ENCODE measurements at regions of chr6 and their contacts with region 1.

Region 1: DNA sequence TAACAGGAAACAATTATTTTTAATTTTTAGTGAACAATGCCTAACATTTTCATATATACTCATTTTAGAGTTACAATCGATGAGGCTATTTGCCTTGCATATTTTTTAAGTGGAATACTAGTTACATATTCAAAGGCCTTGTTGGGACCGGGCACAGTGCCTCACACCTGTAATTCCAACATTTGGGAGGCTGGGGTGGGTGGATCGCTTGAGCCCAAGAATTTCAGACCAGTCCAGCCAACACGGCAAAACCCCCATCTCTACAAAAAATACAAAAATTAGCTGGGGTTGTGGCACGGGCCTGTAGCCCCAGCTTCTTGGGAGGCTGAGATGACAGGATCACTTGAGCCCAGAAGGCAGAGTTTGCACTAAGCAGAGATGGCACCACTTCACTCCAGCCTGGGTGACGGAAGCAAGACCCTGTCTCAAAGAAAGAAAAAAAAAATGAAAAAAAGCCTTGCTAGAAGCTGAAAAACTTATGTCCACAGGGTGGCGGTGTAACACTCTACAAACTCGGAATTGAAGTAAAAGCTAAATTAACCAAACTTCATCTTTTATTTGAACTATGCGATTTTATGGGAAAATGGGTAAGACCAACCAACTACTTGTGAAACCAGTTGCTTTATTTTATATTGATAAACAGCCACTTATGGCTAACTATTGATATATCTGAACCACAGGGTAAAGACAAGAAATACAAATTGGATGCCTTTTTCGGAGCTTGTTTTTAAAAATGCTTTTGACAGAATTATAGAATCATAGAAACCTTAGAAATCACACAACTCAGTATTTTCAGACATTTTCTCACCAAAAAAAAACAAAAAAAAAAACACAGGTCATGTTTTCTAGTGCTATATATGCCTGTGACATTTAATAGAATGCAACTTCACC is 24.1 kb upstream of the ROS1 start:
- DNase-seq: peak in 1 of 2 experiments; percentile 56
- H3K4me3 ChIP-seq: no peak overlapping the region
- H3K27ac ChIP-seq: no peak overlapping the region
- H3K4me1 ChIP-seq: peaks cover 0 to 7% (median 3%) of the 10 kb centered on the region in 4 experiments; a peak in 4 of 7 replicates
- H3K27me3 ChIP-seq: no peaks in the 10 kb centered on the region
- CTCF ChIP-seq: peak in 2 of 3 experiments; percentile 52 to 69; a peak in 2 of 4 replicates
- EP300 ChIP-seq: no peak
- POLR2A ChIP-seq: no peak
- RAD21 ChIP-seq: peak; percentile 78 to 81

Region 2: GRCh38 chr6:116500969-116501433 is 948.8 kb before region 1 on chr6:
- CTCF ChIA-PET with region 1: no interaction called
- POLR2A ChIA-PET with region 1: no interaction called
- DNase-seq: no peak
- H3K4me3 ChIP-seq: no peak overlapping the region
- H3K27ac ChIP-seq: no peak overlapping the region
- H3K4me1 ChIP-seq: peaks cover 0 to 4% (median 0%) of the 10 kb centered on the region in 4 experiments; a peak in 1 of 7 replicates
- H3K27me3 ChIP-seq: no peaks in the 10 kb centered on the region
- CTCF ChIP-seq: no peak
- EP300 ChIP-seq: no peak
- POLR2A ChIP-seq: no peak
- RAD21 ChIP-seq: no peak

Region 3: DNA sequence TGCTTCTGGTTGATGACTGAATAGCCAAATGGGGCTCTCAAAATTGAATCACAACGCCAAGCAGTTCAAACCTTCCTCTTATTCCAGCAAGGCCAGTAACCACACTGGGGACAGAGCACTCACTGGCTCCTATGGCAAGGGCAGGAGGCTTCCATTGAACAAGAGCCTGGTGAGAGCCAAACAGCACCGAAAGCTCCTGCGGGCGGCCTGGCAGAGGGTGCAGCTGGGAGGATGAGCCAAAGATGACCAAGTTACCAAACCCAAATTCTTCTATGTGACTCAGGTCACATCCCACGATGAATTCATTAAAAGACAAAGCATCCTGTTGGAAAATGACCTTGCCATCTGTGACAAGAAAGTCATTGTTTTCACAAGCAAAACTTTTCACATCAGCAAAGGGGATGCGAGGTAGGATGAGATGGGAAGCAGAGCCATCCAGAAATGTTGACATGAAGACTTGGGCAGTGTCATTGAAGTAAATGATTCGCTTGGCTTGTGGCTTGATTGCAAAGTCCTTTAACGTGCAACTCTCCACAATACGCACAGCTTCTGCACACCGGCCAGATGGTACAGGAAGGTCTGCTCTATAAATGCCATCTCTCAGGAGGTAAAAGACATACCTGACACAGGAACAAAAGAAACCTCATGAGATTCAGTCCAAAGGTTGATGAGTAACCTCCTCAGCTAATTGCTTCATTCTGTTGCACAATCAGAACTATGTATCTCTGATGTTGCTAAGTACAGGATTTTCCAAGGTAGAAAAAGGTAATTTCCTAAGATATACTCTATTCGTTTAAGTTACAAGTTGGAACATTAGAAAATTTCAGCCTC is 60.4 kb before region 1 on chr6:
- CTCF ChIA-PET with region 1: no interaction called
- POLR2A ChIA-PET with region 1: no interaction called
- DNase-seq: no peak
- H3K4me3 ChIP-seq: no peak overlapping the region
- H3K27ac ChIP-seq: no peak overlapping the region
- H3K4me1 ChIP-seq: no peaks in the 10 kb centered on the region
- H3K27me3 ChIP-seq: no peaks in the 10 kb centered on the region
- CTCF ChIP-seq: no peak
- EP300 ChIP-seq: no peak
- POLR2A ChIP-seq: no peak
- RAD21 ChIP-seq: no peak

Region 4: DNA sequence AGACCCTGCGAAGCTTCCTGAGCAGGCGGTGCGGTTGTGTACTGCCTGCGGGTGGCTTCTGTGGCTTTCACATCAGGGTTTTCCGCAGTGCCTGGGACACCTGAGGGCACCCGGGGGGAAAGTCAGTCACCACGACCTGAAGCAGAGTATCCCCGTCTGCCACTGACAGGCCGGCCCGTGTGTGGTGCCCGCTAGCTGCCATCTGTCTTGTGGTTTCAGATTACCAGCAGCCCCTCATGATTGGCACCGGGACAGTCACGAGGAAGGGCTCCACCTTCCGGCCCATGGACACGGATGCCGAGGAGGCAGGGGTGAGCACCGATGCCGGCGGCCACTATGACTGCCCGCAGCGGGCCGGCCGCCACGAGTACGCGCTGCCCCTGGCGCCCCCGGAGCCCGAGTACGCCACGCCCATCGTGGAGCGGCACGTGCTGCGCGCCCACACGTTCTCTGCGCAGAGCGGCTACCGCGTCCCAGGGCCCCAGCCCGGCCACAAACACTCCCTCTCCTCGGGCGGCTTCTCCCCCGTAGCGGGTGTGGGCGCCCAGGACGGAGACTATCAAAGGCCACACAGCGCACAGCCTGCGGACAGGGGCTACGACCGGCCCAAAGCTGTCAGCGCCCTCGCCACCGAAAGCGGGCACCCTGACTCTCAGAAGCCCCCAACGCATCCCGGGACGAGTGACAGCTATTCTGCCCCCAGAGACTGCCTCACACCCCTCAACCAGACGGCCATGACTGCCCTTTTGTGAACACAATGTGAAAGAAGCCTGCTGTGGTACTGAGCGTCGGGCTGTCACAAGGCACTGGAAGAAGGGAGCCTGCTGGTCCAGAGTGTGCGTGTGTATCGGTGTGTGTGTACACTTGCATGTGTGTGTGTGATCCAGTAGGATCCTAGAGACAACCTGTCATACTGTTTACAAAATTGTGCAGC is 98.2 kb after region 1 on chr6:
- CTCF ChIA-PET with region 1: interaction called, 36 read pairs
- POLR2A ChIA-PET with region 1: no interaction called
- DNase-seq: no peak
- H3K4me3 ChIP-seq: peak overlapping the region; percentile 14 to 55 (median 20); a peak in 7 of 8 replicates
- H3K27ac ChIP-seq: no peak overlapping the region
- H3K4me1 ChIP-seq: peaks cover 0 to 6% (median 3%) of the 10 kb centered on the region in 4 experiments; a peak in 5 of 7 replicates
- H3K27me3 ChIP-seq: no peaks in the 10 kb centered on the region; a peak in 1 of 7 replicates
- CTCF ChIP-seq: peak in 1 of 3 experiments; percentile 22; a peak in 2 of 4 replicates
- EP300 ChIP-seq: no peak
- POLR2A ChIP-seq: no peak
- RAD21 ChIP-seq: peak in 1 of 2 experiments; percentile 13; a peak in 1 of 4 replicates

Region 5: GRCh38 chr6:117555882-117556498 is 106.2 kb after region 1 on chr6:
- CTCF ChIA-PET with region 1: interaction called, 36 read pairs
- POLR2A ChIA-PET with region 1: no interaction called
- DNase-seq: peak in 1 of 2 experiments; percentile 74
- H3K4me3 ChIP-seq: no peak overlapping the region
- H3K27ac ChIP-seq: no peak overlapping the region
- H3K4me1 ChIP-seq: no peaks in the 10 kb centered on the region
- H3K27me3 ChIP-seq: no peaks in the 10 kb centered on the region
- CTCF ChIP-seq: peak in 2 of 3 experiments; percentile 44 to 63; a peak in 3 of 4 replicates
- EP300 ChIP-seq: no peak
- POLR2A ChIP-seq: no peak
- RAD21 ChIP-seq: peak; percentile 48 to 59

Region 6: DNA sequence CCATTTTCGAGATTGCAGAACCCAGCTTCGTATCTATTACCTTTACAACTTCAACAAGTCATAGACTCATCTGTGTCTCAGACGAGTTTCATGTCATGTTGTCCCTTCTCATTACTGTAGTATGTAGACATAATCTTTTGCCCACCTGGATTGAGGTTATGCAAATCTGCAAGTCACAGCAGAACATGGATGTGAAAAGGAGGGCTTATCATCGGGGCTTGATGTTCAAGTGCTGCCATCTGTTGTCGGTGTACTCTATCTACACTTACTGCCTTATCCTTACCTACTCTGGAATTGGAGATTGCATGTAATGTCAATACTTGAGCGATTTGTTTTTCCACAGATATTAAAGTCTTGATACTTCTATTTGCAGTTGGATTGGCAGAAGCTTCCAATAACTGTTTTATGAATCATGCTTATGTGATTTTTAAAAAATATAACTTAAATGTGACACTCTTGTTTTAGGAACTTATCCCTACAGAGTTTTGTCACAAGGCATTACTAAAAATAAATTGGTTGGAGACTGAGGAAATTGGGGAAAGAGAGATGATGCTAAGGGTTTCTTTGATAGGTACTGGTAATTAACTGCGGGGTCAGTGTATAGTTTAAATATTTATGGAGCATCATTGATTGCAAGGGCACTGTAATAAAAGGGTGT is 155.5 kb after region 1 on chr6:
- CTCF ChIA-PET with region 1: interaction called, 54 read pairs
- POLR2A ChIA-PET with region 1: no interaction called
- DNase-seq: no peak
- H3K4me3 ChIP-seq: no peak overlapping the region
- H3K27ac ChIP-seq: no peak overlapping the region
- H3K4me1 ChIP-seq: no peaks in the 10 kb centered on the region
- H3K27me3 ChIP-seq: no peaks in the 10 kb centered on the region
- CTCF ChIP-seq: peak in 2 of 3 experiments; percentile 72 to 82; a peak in 3 of 4 replicates
- EP300 ChIP-seq: no peak
- POLR2A ChIP-seq: no peak
- RAD21 ChIP-seq: peak; percentile 80 to 81

Measured in H1 (cell line).